ENCODE measurements at regions of chr3 and their contacts with region 1.

Region 1: DNA sequence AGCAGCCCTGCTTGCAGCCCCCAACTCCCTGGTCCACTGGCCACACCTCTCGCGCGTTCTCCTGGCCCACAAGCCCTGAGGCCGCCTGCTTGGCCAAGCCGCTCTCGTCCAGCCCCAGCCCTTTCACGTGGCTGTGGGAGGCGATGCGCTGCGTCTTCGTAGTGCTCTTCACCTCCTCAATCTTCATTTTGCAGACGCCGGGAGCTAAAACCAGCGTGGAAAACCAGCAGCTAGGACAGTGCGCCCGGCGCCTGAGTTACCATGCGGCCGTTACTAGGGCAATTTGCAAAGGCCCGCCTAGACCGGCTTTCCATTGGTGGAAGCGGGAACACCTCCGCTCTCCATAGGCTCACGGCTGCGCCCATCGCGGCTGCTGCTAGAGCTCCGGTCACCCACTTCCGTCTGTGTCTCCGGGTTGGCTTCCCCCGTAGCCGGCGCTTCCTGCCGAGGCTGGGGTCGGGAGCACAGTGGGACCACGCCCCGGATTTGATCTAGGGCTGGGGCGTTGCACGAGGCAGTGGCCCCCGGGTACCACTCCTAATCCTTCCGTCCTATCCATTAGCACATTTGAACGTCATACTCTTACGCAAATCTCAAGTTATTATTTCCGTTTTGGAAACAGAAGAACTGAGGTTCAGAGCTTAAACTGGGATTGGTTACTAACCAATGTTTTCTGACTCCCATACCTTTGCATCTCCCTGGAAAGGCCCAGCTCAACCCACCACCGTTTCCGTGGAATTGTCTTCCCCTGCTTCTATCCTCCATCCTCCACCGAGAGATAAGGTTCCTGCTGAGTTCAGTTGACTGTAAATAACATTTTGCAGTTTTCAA is at the start of gene RUVBL1:
- DNase-seq: peak; percentile 90
- H3K4me3 ChIP-seq: peak within 1 kb of the TSS; percentile 97
- H3K27ac ChIP-seq: peak within 1 kb of the TSS; percentile 82
- H3K27me3 ChIP-seq: peaks cover 3% of the 10 kb centered on the region
- CTCF ChIP-seq: no peak
- polyA plus RNA-seq, gene RUVBL1: 79.5 and 83.3 TPM in 2 replicates

Region 2: GRCh38 chr3:128153156-128154041 is 29.6 kb after region 1 on chr3 and contains the start of gene EEFSEC:
- CTCF ChIA-PET with region 1: interaction called, 4 read pairs
- POLR2A ChIA-PET with region 1: interaction called, 12 read pairs
- DNase-seq: peak; percentile 41
- H3K4me3 ChIP-seq: peak within 1 kb of the TSS; percentile 75
- H3K27ac ChIP-seq: peak within 1 kb of the TSS; percentile 39
- H3K27me3 ChIP-seq: no peaks in the 10 kb centered on the region
- CTCF ChIP-seq: no peak
- polyA plus RNA-seq, gene EEFSEC: 6.8 and 8.7 TPM in 2 replicates

Region 3: DNA sequence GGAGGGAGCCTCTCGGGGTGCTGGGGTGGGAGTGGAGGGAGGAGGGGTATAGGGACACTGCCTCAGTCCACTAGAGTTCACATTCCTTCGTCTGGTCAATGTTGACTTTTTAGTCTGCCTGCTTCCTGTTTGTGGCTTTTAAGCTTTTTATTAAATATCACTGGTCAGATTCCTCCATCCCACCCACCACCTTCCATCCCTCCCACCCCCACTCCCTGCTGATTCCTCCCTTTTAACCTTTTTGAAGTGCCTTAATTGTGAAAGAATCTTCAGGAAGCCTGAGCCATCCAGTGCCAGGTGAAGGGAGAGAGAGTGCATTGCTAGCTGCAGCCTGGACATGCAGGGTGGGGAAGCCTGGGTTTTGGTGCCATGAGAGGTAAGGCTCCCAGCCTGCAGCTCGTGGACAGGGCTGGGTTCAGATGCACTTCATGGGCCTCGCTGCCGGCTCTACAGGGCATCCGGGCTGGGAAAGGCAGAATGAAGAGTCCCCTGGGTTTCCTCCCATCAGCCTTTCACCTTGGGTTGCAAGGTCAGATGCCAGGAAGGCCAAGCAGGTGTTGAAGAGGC is 237.0 kb after region 1 on chr3:
- CTCF ChIA-PET with region 1: no interaction called
- POLR2A ChIA-PET with region 1: no interaction called
- DNase-seq: no peak
- H3K4me3 ChIP-seq: no peak overlapping the region
- H3K27ac ChIP-seq: no peak overlapping the region
- H3K27me3 ChIP-seq: no peaks in the 10 kb centered on the region
- CTCF ChIP-seq: no peak